Posterior vena cava (tissue), 2 donors: ENCODE measurements at regions of chr5 and their contacts with region 1.

Region 1: GRCh38 chr5:54905943-54906537 is 79.4 kb downstream of the ESM1 start:
- DNase-seq: peak; percentile 91

Region 2: GRCh38 chr5:54832858-54833257 is 73.2 kb before region 1 on chr5:
- intact Hi-C with region 1: no loop called
- DNase-seq: no peak

Region 3: GRCh38 chr5:54944364-54944763 is 38.3 kb after region 1 on chr5:
- intact Hi-C with region 1: no loop called
- DNase-seq: no peak

Region 4: DNA sequence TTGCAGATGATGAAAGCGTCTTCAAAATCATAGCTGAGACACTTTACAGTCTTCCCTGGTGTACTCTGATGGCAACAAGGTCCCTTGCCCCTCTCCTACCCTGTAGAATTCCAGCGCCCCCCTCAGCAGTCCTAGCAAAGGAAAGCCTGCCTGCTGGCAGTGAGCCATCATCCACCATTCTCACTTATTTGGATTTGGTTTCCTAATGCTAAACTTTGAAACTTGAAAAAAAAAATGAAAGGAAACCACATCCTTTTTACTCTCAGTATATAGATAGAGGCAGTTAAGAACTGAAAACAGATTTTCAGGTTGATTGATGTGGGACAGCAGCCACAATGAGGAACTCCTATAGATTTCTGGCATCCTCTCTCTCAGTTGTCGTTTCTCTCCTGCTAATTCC is 196.3 kb after region 1 on chr5 and contains the start of gene GZMA:
- intact Hi-C with region 1: no loop called
- DNase-seq: no peak
- total RNA-seq, gene GZMA: 1.6 to 1.7 TPM

Region 5: GRCh38 chr5:55146543-55147151 is 240.6 kb after region 1 on chr5:
- intact Hi-C with region 1: loop called (anchors 10 kb)
- DNase-seq: peak; percentile 88

Region 6: GRCh38 chr5:55159763-55160492 is 253.9 kb after region 1 on chr5 and contains the start of gene GPX8:
- intact Hi-C with region 1: loop called in 1 of 2 experiments (anchors 10 kb)
- DNase-seq: no peak
- total RNA-seq, gene GPX8: 26.1 to 49.9 TPM